Body of pancreas (tissue), 4 donors: ENCODE measurements at regions of chr1 and their contacts with region 1.

Region 1: DNA sequence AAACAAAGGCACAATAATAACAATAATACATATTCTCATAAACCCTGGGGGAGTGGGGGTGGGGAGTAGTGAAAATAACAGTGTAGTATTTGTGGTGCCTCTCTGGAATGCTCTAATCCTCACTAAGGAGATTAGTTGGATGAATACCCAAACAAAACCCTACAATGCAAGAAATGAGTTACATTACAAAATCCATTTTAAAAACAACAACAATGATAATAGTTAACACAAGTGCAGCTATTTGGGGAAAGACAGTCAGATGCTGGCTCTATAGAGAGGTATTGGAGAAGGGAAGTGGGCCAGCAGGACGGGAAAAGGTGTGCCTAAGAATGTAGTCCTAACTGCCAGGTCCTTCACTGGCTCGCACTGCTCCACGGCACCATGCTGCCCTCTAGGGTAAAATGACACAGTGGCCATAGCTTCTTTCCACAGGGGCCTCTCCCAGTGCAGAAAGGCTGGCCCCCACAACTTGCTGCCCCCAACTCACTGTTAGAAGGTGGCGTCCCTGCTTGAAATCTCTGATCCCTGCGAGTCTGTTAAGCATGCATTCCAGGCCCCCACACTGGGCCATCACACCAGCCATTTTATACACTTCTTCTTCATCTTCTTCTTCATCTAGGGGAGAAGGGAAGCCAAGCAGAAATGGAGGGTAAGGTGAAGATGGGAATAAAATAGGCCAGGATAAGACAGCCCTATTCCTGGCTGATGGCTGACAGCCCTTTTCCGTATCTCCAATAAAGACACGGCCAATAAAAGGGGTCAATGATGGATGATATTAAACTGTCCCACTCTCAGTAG is 113.8 kb downstream of the UBR4 start:
- DNase-seq: peak; percentile 69 to 75 (median 72)
- ATAC-seq: peak; percentile 83
- H3K4me3 ChIP-seq: no peak overlapping the region
- H3K27ac ChIP-seq: peak overlapping the region in 1 of 4 donors; percentile 20
- H3K4me1 ChIP-seq: peaks cover 11% of the 10 kb centered on the region
- H3K27me3 ChIP-seq: no peaks in the 10 kb centered on the region
- CTCF ChIP-seq: peak; percentile 36 to 82 (median 73)
- POLR2A ChIP-seq: no peak

Region 2: DNA sequence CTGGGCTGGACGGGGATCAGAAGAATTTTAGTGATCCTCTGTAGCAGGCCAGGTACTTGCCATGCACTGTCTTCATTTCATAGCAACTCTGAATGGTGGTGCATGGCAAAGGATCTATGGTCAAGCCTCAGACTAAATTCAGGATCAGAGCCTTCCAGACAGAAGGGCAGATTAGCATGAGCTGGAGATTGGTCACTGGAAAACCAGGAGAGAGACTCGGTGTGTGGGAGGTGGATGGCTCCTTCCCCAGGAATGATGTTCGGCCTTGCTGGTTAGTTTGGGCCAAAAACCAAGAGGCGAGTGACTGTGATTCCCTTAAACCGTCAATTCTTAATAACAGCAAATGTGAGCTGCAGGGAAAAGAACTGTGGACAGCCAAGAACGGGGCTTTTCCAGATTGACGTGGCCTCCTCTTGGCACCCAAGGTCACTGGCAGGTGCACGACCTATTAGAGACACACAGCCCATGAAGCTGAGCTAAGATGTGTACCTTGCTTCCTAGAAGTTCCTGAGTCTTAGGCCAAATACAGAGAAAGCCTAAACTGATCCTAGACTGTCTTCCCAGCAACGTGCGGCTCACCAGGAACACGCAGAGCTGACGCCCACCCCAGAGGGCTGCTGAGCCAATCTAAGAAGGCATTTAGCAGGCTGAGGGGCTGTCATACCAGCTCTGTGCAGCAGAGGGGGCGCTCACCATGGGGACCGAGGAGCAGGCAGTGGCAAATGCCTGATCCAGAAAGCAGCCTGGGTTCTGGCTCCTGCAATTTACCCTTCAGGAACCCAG is 212.4 kb before region 1 on chr1:
- intact Hi-C with region 1: loop called (anchors 10 kb)
- DNase-seq: peak; percentile 75 to 82 (median 78)
- ATAC-seq: peak; percentile 82
- H3K4me3 ChIP-seq: no peak overlapping the region
- H3K27ac ChIP-seq: no peak overlapping the region
- H3K4me1 ChIP-seq: peaks cover 5% of the 10 kb centered on the region
- H3K27me3 ChIP-seq: no peaks in the 10 kb centered on the region
- CTCF ChIP-seq: peak; percentile 81 to 92 (median 89)
- POLR2A ChIP-seq: no peak